Sigmoid colon (tissue), 7 donors: ENCODE measurements at regions of chr9 and their contacts with region 1.

Region 1: DNA sequence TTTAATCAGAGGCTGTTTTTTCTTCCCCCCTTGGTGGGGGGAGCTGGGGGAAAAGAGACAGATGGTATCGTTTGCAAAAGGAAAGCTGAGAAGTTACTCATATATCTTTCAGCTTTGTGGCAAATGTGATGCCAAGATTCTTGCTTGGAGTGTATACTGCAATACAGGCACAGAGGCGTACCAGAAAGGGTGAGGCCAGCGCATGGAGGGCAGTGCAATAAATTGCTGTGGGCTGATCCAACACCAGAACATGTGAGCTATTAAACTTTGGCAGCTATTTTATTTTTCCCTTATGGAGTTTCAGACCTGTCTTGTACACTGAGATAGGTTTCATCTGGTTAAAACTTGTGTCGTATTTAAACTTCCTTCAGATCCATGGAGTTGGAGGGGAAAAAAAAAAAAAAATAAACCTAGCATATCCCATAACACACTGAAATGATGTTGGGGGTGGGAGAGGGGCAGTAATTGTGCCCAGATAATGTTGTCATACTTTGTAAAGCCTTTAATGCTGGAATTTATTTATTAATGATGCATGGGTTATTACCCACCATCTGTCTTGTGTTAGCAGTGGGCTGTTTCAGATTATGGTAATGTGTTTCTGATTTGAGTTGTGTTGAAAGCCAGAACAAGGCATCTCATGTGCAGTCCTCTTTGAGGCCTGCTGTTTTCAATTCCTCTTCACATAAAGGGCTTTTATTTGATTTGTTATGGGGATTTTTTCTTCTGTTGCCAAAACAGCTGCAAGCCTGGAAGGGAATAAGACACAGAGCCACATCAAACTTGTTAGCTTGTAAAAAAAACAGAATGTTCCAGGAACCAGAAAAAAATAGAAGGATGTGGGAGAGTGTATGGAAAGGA is 891.3 kb downstream of the TLE1 start:
- DNase-seq: peak; percentile 91
- H3K4me3 ChIP-seq: peak overlapping the region in 1 of 4 donors; percentile 6
- H3K27ac ChIP-seq: peak overlapping the region; percentile 69 to 80 (median 76)
- H3K4me1 ChIP-seq: peaks cover 0 to 38% (median 33%) of the 10 kb centered on the region in 4 donors
- H3K27me3 ChIP-seq: no peaks in the 10 kb centered on the region
- CTCF ChIP-seq: no peak
- EP300 ChIP-seq: peak; percentile 47 to 92 (median 76)
- POLR2A ChIP-seq: no peak

Region 2: GRCh38 chr9:80605129-80605528 is 192.9 kb before region 1 on chr9:
- intact Hi-C with region 1: loop called (anchors 5 kb)
- DNase-seq: no peak
- H3K4me3 ChIP-seq: no peak overlapping the region
- H3K27ac ChIP-seq: no peak overlapping the region
- H3K4me1 ChIP-seq: peaks cover 0 to 17% (median 8%) of the 10 kb centered on the region in 4 donors
- H3K27me3 ChIP-seq: no peaks in the 10 kb centered on the region
- CTCF ChIP-seq: peak; percentile 18 to 49 (median 29)
- EP300 ChIP-seq: no peak
- POLR2A ChIP-seq: no peak

Region 3: GRCh38 chr9:80842389-80842788 is 44.3 kb after region 1 on chr9:
- intact Hi-C with region 1: no loop called
- DNase-seq: no peak
- H3K4me3 ChIP-seq: no peak overlapping the region
- H3K27ac ChIP-seq: no peak overlapping the region
- H3K4me1 ChIP-seq: peaks cover 0 to 5% (median 0%) of the 10 kb centered on the region in 4 donors
- H3K27me3 ChIP-seq: no peaks in the 10 kb centered on the region
- CTCF ChIP-seq: no peak
- EP300 ChIP-seq: no peak
- POLR2A ChIP-seq: no peak

Region 4: DNA sequence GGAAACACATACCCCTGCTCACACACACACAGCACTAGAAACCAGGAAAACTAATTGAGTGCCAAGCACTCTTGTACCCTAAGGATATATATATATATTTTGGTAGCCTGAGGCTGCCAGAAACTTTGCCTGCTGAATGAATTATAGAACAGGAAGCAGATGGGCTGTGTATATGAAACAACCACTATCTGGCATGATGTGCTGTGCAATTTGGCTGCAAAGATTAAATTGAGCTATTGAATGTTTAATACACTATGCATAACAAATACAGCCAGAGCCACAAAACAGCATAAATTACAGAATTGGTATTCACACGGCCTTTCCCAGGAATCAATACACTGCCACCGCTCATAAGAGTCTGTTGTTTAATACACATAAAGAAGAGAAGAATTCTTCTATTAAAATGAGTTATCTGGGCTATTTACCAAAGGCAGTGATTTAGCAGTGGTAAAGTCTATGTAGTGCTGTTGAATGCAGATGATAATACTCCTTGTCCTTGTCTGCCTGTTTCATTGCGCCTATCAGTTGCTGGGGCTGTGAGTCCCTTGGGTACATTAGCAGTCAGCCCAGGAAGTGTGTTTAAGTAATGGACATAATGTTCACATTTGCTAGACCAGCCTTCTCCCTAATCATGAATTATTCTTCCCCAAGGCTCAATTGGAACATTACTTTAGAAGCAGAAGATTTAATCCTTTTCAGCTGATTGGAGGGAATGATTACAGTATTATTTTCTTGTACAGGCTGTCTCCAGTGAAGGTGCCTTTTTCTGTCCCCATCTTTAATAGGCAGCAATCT is 597.0 kb after region 1 on chr9:
- intact Hi-C with region 1: loop called (anchors 5 kb)
- DNase-seq: no peak
- H3K4me3 ChIP-seq: no peak overlapping the region
- H3K27ac ChIP-seq: peak overlapping the region; percentile 52 to 75 (median 71)
- H3K4me1 ChIP-seq: peaks cover 0 to 40% (median 38%) of the 10 kb centered on the region in 4 donors
- H3K27me3 ChIP-seq: no peaks in the 10 kb centered on the region
- CTCF ChIP-seq: no peak
- EP300 ChIP-seq: no peak
- POLR2A ChIP-seq: no peak

Region 5: DNA sequence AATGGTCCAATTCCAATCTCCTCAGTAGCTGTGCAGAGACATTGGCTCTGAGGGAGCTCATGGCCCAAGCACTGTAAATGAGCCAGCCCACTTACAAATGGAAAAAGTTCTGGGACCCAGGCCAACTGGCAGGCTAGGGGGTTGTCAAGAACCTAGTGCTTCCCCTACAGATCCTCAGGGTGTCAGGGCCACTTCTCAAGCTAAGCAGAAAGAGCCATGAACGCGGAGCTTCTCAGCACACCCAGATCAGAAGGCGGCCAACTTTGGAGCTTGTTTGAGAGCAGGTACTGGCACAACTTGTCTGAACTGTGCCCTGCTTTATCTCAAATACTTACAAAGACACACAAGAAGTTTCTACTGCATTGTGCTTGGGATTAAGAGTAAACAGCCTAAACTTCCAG is 873.8 kb after region 1 on chr9:
- intact Hi-C with region 1: loop called (anchors 5 kb)
- DNase-seq: peak; percentile 99
- H3K4me3 ChIP-seq: no peak overlapping the region
- H3K27ac ChIP-seq: peak overlapping the region; percentile 56 to 79 (median 72)
- H3K4me1 ChIP-seq: peaks cover 0 to 51% (median 43%) of the 10 kb centered on the region in 4 donors
- H3K27me3 ChIP-seq: no peaks in the 10 kb centered on the region
- CTCF ChIP-seq: no peak
- EP300 ChIP-seq: peak; percentile 60 to 82 (median 63)
- POLR2A ChIP-seq: no peak